ENCODE measurements at regions of chr1 and their contacts with region 1.

Region 1: DNA sequence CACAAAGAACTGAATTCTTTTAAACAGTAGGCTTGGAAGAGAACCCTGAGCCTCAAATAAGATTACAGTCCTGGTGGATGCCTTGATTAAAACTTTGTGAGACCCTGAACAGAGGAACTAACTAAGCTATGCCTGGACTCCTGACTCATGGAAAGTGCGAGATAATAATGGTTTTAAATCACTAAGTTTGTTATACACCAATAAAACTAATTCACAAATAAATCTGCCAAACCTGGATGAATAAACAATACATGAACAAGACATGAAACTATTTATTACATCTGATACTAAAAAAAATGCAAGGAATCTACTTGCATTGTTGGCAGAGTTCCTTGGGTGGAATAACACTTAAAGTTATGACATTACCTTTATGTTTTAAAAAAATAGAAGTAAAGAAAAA is 118.4 kb downstream of the PIGK start:
- DNase-seq: peak; percentile 59
- ATAC-seq: peak; percentile 83
- H3K4me3 ChIP-seq: no peak overlapping the region
- H3K27ac ChIP-seq: no peak overlapping the region
- H3K4me1 ChIP-seq: peaks cover 13% of the 10 kb centered on the region
- H3K27me3 ChIP-seq: no peaks in the 10 kb centered on the region
- CTCF ChIP-seq: no peak

Region 2: DNA sequence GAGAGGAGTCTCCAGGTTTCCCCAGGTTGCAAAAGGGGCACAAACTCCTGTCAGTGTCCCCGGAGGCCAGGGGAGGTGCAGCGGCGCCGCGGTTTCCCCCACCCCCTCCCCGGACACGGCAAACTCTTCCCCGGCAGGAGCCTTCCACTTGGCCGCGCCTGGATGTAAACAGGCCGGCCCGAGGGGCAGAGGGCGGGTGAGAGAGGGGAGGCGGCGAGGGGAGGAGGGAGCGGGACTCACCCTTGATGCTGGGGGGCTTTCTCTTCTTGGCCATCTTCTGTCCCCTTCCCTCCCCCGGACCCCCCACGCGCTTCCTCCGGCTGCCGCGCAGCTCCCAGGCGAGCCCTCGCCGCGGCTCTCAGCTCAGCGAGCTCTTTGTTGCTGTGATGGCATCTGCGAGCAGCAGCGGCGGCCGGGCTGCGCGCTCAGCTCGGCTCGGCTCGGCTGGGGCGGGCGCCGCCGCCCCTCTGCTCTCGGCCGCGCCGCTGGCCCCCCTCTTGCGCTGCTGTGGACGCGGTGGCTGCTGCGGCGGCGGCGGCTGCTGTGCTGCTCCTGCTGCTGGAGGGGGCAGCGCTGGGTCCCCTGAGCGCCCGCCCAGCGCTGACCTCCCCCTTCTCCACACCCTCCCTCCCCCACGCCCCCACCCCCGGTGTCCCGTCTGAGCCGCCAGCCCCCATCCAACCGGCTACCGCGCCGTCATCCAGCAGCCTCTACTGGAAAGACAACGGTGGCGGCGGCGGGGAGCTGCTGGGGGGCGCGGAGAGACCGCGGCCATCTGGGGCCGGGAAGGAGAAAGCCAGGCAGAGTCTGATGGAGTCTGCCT is 1485.0 kb before region 1 on chr1:
- CTCF ChIA-PET with region 1: interaction called, 16 read pairs
- POLR2A ChIA-PET with region 1: no interaction called
- intact Hi-C with region 1: no loop called
- DNase-seq: peak; percentile 16
- ATAC-seq: peak; percentile 49
- H3K4me3 ChIP-seq: peak overlapping the region; percentile 69
- H3K27ac ChIP-seq: no peak overlapping the region
- H3K4me1 ChIP-seq: peaks cover 11% of the 10 kb centered on the region
- H3K27me3 ChIP-seq: peaks cover 46% of the 10 kb centered on the region
- CTCF ChIP-seq: no peak

Region 3: DNA sequence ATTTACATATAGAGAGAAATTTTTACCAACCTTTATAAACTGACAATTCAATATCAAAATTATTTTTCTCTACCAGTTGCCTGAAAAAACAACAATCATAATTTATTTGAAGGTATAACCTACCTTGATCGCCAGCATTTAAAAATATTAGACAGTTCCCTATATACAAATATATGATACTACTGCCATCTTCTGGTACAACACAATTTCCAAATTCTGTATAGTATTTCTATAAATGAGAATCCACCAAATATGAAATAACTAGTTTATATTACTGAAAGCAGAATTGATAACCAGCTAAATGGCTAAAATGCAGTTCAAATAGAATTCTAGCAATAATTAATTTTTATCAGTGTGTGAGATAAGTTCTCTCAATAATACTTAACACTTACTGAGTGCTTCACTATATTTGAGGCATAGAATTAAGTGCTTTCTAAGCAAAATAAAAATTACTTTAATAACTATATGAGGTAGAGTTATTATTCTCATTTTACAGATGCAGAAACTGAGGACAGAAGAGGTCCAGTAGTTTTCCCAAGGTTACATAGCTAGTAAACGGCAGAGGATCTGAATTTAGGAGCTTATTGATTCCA is 42.8 kb after region 1 on chr1:
- CTCF ChIA-PET with region 1: no interaction called
- POLR2A ChIA-PET with region 1: no interaction called
- intact Hi-C with region 1: no loop called
- DNase-seq: peak; percentile 54
- ATAC-seq: peak; percentile 48; the same call in 1 of the 2 replicates
- H3K4me3 ChIP-seq: no peak overlapping the region
- H3K27ac ChIP-seq: no peak overlapping the region
- H3K4me1 ChIP-seq: no peaks in the 10 kb centered on the region
- H3K27me3 ChIP-seq: no peaks in the 10 kb centered on the region
- CTCF ChIP-seq: peak; percentile 73